ENCODE measurements at regions of chr17 and their contacts with region 1.

Region 1: GRCh38 chr17:36534840-36535668 is at the starts of genes MYO19 and PIGW:
- DNase-seq: peak; percentile 91
- ATAC-seq: peak; percentile 90
- H3K4me3 Mint-ChIP-seq: peak within 1 kb of the TSS; percentile 95
- H3K27ac Mint-ChIP-seq: peak within 1 kb of the TSS; percentile 98
- H3K4me1 Mint-ChIP-seq: peaks cover 13% of the 10 kb centered on the region
- H3K27me3 Mint-ChIP-seq: no peaks in the 10 kb centered on the region
- CTCF ChIP-seq: no peak
- total RNA-seq, gene MYO19: 119 to 146 TPM (median 128 TPM) in 3 replicates
- total RNA-seq, gene PIGW: 14.6 to 21.7 TPM (median 15.1 TPM) in 3 replicates

Region 2: GRCh38 chr17:36514856-36515255 is 20.2 kb before region 1 on chr17:
- CTCF ChIA-PET with region 1: interaction called, 12 read pairs
- POLR2A ChIA-PET with region 1: interaction called, 5 read pairs
- DNase-seq: no peak
- ATAC-seq: no peak
- H3K4me3 Mint-ChIP-seq: no peak overlapping the region
- H3K27ac Mint-ChIP-seq: no peak overlapping the region
- H3K4me1 Mint-ChIP-seq: no peaks in the 10 kb centered on the region
- H3K27me3 Mint-ChIP-seq: no peaks in the 10 kb centered on the region
- CTCF ChIP-seq: no peak

Region 3: DNA sequence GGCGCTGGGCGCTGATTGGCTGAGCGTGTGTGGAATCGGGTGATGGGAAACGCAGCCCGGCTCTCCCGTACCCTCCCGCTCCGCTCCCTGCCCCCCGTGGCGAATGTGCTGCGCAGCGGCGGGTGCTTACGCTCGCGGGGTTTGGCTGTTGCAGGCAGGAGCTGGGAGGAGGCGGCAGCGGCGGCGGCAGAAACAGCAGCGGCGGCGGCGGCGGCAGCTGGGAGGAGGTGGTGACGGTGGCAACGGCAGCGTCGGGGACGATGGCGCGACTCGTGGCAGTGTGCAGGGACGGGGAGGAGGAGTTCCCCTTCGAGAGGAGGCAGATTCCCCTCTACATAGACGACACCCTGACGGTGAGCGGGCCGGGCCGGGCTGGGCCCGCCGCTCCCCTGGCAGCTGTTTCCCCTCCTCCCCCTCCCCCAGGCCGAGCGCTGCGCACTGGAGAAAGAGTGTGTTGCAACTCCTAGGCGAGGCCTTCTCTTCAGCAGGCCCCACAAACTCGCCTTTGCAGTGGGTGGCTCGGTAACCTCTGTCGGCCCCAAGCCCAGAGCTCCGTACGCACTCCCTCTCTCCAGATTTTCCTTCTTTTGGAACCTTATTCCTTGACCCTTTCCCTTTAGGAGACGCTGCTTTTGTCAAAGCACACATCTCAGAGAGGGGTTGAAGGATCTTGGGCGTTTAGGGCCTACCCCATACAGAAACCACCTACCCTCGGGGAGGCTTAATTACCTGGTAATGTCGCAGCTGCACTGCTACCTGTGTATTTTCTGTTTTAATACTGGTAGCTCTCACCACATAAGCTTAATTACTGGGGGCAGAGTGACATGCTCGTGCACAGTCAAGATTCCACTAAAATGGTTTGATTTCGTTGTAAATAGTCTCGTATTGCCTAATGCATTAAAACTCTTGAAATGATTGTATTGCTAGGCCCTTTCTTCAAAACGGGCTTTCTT is 10.7 kb after region 1 on chr17:
- CTCF ChIA-PET with region 1: interaction called, 40 read pairs
- POLR2A ChIA-PET with region 1: interaction called, 37 read pairs
- DNase-seq: peak; percentile 99
- ATAC-seq: peak; percentile 81
- H3K4me3 Mint-ChIP-seq: peak overlapping the region; percentile 94
- H3K27ac Mint-ChIP-seq: peak overlapping the region; percentile 96
- H3K4me1 Mint-ChIP-seq: peaks cover 24% of the 10 kb centered on the region
- H3K27me3 Mint-ChIP-seq: no peaks in the 10 kb centered on the region
- CTCF ChIP-seq: no peak

Measured in WTC11 (cell line).